ENCODE measurements at regions of chr18 and their contacts with region 1.

Region 1: DNA sequence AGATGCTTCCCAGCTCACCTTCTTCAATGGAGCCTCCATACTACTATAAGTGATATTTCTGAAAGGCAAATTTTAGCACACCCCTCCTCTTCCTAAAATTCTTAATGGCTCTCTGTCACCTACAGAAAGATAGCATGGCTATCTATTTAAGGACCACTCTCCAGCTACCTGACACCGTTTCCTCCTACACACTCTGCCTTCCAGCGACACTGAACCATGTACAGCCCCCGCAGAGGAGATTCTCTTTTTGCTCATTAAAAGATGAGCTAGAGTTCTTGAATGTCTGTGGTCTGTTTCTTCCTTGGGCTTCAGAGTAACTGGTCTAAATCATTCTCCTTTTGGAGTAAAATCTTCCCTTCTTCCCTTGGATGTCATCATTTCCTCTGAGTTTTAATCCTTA is 38.4 kb upstream of the GAREM1 start:
- DNase-seq: no peak
- ATAC-seq: no peak
- H3K4me3 ChIP-seq: no peak overlapping the region
- H3K4me3 Mint-ChIP-seq: no peak overlapping the region
- H3K27ac ChIP-seq: no peak overlapping the region
- H3K27ac Mint-ChIP-seq: no peak overlapping the region
- H3K4me1 ChIP-seq: no peaks in the 10 kb centered on the region
- H3K4me1 Mint-ChIP-seq: no peaks in the 10 kb centered on the region
- H3K27me3 ChIP-seq: no peaks in the 10 kb centered on the region
- H3K27me3 Mint-ChIP-seq: peaks cover 5% of the 10 kb centered on the region
- CTCF ChIP-seq: no peak

Region 2: DNA sequence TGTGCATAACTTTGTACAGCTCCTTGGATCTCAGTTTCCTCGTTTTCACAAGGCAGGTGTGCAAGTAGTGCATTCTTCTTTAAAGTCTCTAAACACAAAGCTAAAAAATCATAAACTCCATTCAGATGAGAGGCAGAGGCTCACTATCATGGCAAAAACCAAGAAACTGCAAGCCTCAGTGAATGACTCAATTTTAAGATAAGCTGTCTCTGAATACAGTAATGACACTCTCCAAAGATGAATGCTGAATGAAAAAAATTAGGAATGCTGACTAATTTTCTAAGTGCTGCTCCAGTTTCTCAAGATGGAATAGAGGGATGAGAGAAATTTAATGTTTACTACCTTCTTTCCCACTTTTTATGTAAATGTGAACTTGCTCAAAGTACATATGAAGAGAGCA is 841.9 kb before region 1 on chr18:
- CTCF ChIA-PET with region 1: no interaction called
- POLR2A ChIA-PET with region 1: no interaction called
- intact Hi-C with region 1: no loop called
- DNase-seq: no peak
- ATAC-seq: no peak
- H3K4me3 ChIP-seq: no peak overlapping the region
- H3K4me3 Mint-ChIP-seq: no peak overlapping the region
- H3K27ac ChIP-seq: no peak overlapping the region
- H3K27ac Mint-ChIP-seq: no peak overlapping the region
- H3K4me1 ChIP-seq: no peaks in the 10 kb centered on the region
- H3K4me1 Mint-ChIP-seq: no peaks in the 10 kb centered on the region
- H3K27me3 ChIP-seq: no peaks in the 10 kb centered on the region
- H3K27me3 Mint-ChIP-seq: peaks cover 4% of the 10 kb centered on the region
- CTCF ChIP-seq: no peak

Region 3: DNA sequence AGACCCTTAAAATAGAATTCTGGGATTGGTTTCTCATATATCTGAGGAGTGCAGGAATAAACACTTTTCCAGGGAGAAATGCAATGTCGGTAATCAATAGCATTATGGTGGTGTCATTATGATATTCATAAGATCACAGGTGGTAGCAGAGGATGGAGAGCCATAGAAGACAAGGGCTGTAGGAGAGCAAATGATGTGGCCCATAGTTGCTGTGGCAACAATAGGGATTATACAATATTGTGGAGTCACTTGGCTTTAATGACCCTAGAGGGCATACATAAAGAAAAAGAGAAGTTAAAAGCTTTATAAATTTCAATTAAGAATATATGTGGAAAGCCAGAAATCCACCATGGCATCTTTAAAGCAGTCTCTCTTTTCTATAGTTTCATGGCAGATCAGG is 15.0 kb before region 1 on chr18:
- CTCF ChIA-PET with region 1: no interaction called
- POLR2A ChIA-PET with region 1: no interaction called
- intact Hi-C with region 1: loop called in 1 of 2 experiments (anchors 1 kb)
- DNase-seq: no peak
- ATAC-seq: no peak
- H3K4me3 ChIP-seq: no peak overlapping the region
- H3K4me3 Mint-ChIP-seq: no peak overlapping the region
- H3K27ac ChIP-seq: no peak overlapping the region
- H3K27ac Mint-ChIP-seq: no peak overlapping the region
- H3K4me1 ChIP-seq: no peaks in the 10 kb centered on the region
- H3K4me1 Mint-ChIP-seq: no peaks in the 10 kb centered on the region
- H3K27me3 ChIP-seq: no peaks in the 10 kb centered on the region
- H3K27me3 Mint-ChIP-seq: peaks cover 8% of the 10 kb centered on the region
- CTCF ChIP-seq: no peak